Transverse colon (tissue), 4 donors: ENCODE measurements at regions of chr2 and their contacts with region 1.

Region 1: GRCh38 chr2:41928526-41928925 is 119.3 kb upstream of the PKDCC start:
- DNase-seq: no peak
- H3K4me3 ChIP-seq: no peak overlapping the region
- H3K27ac ChIP-seq: peak overlapping the region; percentile 60 to 75 (median 74)
- H3K4me1 ChIP-seq: peaks cover 0 to 33% (median 4%) of the 10 kb centered on the region in 4 donors
- H3K27me3 ChIP-seq: no peaks in the 10 kb centered on the region
- CTCF ChIP-seq: no peak
- EP300 ChIP-seq: no peak
- POLR2A ChIP-seq: no peak

Region 2: DNA sequence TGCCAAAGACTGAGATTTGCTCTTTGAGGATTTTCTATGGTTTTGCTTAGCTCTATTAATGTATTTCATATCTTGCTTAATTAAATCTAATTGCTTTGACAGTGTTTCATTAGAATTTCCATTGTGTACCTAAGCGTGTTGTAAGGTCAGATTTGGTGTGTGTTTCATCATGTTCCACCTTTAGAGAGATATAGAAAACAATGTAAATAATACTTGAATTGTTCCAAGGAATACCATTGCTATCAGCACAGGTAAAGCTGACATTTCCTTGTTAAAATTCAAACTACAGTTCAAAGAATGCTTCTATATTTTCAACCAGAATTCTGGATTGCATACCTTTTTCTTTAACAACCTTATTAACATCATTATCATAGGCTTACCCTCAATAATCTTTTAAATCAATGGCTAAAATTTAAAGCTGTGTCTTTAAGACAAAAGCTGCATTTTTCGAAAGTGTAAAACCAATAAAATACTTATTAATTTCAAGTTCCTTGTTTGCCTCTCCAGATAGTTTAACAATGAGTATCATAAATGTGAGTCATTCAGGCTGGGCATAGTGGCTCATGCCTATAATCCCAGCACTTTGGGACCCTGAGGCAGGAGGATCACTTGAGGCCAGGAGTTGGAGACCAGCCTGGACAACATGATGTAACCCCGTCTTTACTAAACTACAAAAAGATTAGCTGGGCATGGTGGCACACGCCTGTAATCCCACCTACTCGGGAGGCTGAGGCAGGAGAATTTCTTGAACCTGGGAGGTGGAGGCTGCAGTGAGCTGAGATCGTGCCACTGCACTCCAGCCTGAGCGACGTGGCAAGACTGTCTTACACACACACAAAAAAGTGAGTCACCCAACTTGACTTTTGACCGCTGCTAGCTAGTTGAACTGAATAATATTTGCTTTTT is 68.7 kb before region 1 on chr2:
- in situ Hi-C with region 1: no loop called
- intact Hi-C with region 1: no loop called
- DNase-seq: no peak
- H3K4me3 ChIP-seq: no peak overlapping the region
- H3K27ac ChIP-seq: peak overlapping the region in 3 of 4 donors; percentile 16 to 47 (median 28)
- H3K4me1 ChIP-seq: peaks cover 0 to 16% (median 4%) of the 10 kb centered on the region in 4 donors
- H3K27me3 ChIP-seq: no peaks in the 10 kb centered on the region
- CTCF ChIP-seq: no peak
- EP300 ChIP-seq: no peak
- POLR2A ChIP-seq: no peak

Region 3: GRCh38 chr2:42053791-42054701 is 125.5 kb after region 1 on chr2:
- in situ Hi-C with region 1: no loop called
- intact Hi-C with region 1: loop called (anchors 5 kb)
- DNase-seq: peak; percentile 66
- H3K4me3 ChIP-seq: no peak overlapping the region
- H3K27ac ChIP-seq: peak overlapping the region; percentile 86 to 96 (median 92)
- H3K4me1 ChIP-seq: peaks cover 64 to 89% (median 75%) of the 10 kb centered on the region in 4 donors
- H3K27me3 ChIP-seq: no peaks in the 10 kb centered on the region
- CTCF ChIP-seq: no peak
- EP300 ChIP-seq: no peak
- POLR2A ChIP-seq: no peak